AG04449 (cell line): ENCODE measurements at regions of chr5 and their contacts with region 1.

Region 1: GRCh38 chr5:60668686-60669304 is 31.2 kb downstream of the DEPDC1B start:
- DNase-seq: no peak
- H3K4me3 ChIP-seq: no peak overlapping the region
- CTCF ChIP-seq: no peak

Region 2: DNA sequence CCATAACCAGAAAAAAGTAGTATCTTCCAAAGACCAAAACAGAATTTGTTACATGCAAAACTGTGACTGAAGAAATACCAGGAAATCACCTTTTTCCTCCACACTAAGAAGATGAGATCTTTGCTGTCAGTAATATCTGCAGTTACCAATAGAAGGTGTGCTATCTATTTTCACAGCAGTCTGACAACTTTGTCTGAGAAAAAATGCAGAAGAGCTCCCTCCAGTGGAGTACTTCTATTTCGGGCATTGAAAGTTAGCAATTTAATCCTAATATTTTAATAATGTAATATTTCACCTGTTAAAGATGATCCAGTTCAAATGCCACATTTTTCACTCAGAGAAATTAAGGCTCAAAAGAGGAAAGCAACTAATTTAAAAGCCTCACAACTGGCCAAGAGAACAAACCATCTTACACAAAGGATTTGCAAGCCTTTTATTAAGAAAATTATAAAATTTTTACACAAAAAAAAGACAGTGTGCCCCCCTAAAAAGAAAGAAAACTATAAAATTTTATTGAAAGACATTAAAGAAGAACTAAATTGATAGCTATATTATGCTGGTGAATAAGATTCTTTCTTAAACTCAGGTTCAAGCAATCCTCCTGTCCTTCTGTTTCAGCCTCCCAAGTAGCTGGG is 19.4 kb before region 1 on chr5:
- CTCF ChIA-PET with region 1: interaction called, 14 read pairs
- POLR2A ChIA-PET with region 1: no interaction called
- DNase-seq: no peak
- H3K4me3 ChIP-seq: no peak overlapping the region
- CTCF ChIP-seq: peak; percentile 48

Region 3: GRCh38 chr5:60699530-60700382 is 31.0 kb after region 1 on chr5 and contains the start of gene DEPDC1B:
- CTCF ChIA-PET with region 1: interaction called, 25 read pairs
- POLR2A ChIA-PET with region 1: no interaction called
- DNase-seq: peak; percentile 31
- H3K4me3 ChIP-seq: peak within 1 kb of the TSS; percentile 92
- CTCF ChIP-seq: peak; percentile 45

Region 4: DNA sequence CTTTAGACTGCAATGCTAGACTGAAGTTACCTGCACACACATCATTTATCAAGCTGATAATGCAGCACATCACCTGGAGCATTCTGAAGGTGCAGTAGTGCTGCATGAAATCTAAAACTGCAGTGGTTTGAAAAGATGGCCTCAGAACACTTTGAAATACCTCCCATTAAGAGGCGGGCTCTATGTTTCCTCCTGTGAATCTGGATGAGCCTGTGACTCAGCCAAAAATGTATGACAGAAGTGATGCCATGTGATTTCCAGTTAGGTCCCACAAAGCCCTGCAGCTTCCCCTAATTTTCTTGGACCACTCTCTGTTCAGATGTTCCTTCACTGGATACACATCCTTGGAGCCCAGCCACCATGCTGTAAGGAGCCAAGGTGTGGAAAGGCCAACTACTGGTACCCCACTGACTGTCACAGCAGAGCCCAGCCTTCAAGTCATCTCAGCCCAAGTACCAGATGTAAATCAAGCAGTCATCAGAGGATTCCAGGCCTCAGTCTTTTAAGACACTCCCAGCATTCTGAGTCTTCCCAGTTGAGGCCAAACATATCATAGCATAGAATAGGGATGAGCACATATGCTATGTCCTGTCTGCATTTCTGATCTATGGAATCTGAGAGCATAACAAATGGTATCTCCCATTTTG is 58.4 kb after region 1 on chr5:
- CTCF ChIA-PET with region 1: no interaction called
- POLR2A ChIA-PET with region 1: no interaction called
- DNase-seq: no peak
- H3K4me3 ChIP-seq: no peak overlapping the region
- CTCF ChIP-seq: no peak